Right ventricle myocardium inferior (tissue), 1 donor: ENCODE measurements at regions of chr20 and their contacts with region 1.

Region 1: DNA sequence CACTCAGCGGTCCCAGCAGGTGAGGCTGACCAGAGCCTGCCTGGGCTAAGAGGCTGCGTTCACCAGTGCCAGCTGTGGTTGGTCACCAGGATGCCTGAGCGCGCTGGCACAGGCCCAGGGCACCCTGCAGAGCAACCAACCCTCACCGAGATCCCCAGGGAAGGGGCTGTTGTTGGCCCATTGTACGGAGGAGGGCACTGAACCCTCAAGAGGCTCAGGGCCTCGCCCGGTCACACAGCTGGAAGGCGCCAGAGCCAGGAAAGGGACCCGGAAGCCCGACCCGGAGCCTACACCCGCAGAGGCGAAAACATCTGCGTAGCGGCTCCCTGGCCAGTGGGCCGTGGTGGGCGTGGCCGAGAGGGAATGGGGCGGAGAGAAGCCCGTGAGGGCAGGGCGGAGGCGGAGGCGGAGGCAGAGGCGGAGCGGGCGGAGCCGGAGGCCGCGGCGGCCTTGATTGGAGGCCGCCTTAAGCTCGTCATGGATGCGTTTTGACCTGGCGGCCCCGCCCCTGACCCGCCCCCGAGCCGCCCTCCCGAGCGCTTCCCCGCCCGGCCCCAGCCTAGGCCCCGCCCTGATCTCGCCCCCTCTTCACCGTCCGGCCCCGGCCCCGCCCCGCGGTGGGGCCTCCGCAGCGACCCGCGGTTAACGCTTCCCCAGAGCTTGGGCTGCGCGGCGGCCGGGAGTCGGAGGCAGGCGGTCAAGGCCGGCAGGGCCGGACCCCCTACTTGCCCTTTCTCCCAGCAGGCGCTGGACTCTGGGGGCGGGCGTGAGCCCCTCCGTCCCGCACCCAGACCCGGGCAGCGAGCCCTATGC is 2.2 kb upstream of the MRGBP start:
- DNase-seq: peak; percentile 99
- ATAC-seq: peak; percentile 94

Region 2: GRCh38 chr20:62386383-62387218 is 407.5 kb before region 1 on chr20 and contains the start of gene RPS21:
- intact Hi-C with region 1: loop called (anchors 10 kb)
- DNase-seq: peak; percentile 97
- ATAC-seq: peak; percentile 93
- total RNA-seq, gene RPS21: 782 TPM

Region 3: GRCh38 chr20:62623488-62624324 is 170.4 kb before region 1 on chr20:
- intact Hi-C with region 1: loop called (anchors 5 kb)
- DNase-seq: peak; percentile 98
- ATAC-seq: peak; percentile 95

Region 4: GRCh38 chr20:62668441-62669027 is 125.6 kb before region 1 on chr20:
- intact Hi-C with region 1: loop called (anchors 1 kb)
- DNase-seq: no peak
- ATAC-seq: peak; percentile 60

Region 5: DNA sequence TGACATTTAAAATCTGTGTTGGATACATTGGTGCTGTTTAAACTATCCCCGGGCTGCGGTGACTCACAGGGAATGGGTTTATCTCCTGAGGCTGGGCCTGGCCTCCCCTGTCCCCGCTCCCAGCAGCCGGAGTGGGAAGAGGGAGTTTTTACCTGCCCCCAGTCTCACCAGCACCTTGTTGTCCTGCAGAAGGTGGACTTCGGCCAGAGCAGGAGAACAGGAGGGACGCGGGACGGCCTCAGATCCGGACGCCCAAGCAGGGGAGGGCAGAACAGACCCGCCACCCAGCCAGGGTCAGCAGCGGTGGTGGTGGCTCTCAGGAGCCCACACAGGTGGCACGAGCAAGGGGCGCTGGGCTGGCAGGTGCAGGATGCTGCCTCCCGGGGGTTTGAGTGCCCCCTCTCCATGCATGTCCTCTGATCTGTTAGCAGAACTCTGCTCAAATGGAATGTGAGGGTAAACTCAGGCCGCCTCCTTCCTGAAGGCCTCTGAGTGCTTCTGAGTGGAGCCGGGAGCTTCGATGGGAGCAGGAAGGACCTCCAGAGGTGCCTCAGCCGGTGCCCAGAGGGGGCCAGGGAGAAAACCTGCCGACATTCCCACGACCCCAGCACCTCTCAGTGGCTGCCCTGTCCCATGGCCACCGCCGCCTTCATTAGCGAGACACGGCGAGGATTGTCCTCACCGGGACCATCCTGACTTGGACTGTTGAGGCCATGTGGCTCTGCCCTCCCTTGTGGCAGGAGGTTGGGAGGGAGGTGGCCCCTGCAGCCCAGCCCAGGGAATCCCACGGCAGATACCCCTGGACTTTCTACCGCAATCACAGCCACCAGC is 41.2 kb before region 1 on chr20:
- intact Hi-C with region 1: no loop called
- DNase-seq: peak; percentile 13
- ATAC-seq: no peak